ENCODE measurements at regions of chr14 and their contacts with region 1.

Region 1: GRCh38 chr14:99982537-99983250 is 82.5 kb upstream of the EVL start:
- DNase-seq: peak in 1 of 2 donors; percentile 42
- ATAC-seq: peak; percentile 84 to 93 (median 88)
- H3K4me3 ChIP-seq: no peak overlapping the region
- H3K27ac ChIP-seq: no peak overlapping the region
- H3K4me1 ChIP-seq: peaks cover 10% of the 10 kb centered on the region
- H3K27me3 ChIP-seq: no peaks in the 10 kb centered on the region
- CTCF ChIP-seq: peak; percentile 87

Region 2: GRCh38 chr14:100022762-100023451 is 40.2 kb after region 1 on chr14:
- intact Hi-C with region 1: loop called in 1 of 2 experiments (anchors 5 kb)
- DNase-seq: peak; percentile 49 to 80
- ATAC-seq: peak; percentile 93 to 98 (median 97)
- H3K4me3 ChIP-seq: no peak overlapping the region
- H3K27ac ChIP-seq: peak overlapping the region; percentile 6
- H3K4me1 ChIP-seq: peaks cover 9% of the 10 kb centered on the region
- H3K27me3 ChIP-seq: no peaks in the 10 kb centered on the region
- CTCF ChIP-seq: no peak

Region 3: GRCh38 chr14:100108042-100108825 is 125.5 kb after region 1 on chr14:
- intact Hi-C with region 1: loop called (anchors 1 to 2 kb)
- DNase-seq: peak; percentile 86 to 90
- ATAC-seq: peak; percentile 86 to 96 (median 88)
- H3K4me3 ChIP-seq: no peak overlapping the region
- H3K27ac ChIP-seq: no peak overlapping the region
- H3K4me1 ChIP-seq: peaks cover 22% of the 10 kb centered on the region
- H3K27me3 ChIP-seq: no peaks in the 10 kb centered on the region
- CTCF ChIP-seq: peak; percentile 90

Region 4: DNA sequence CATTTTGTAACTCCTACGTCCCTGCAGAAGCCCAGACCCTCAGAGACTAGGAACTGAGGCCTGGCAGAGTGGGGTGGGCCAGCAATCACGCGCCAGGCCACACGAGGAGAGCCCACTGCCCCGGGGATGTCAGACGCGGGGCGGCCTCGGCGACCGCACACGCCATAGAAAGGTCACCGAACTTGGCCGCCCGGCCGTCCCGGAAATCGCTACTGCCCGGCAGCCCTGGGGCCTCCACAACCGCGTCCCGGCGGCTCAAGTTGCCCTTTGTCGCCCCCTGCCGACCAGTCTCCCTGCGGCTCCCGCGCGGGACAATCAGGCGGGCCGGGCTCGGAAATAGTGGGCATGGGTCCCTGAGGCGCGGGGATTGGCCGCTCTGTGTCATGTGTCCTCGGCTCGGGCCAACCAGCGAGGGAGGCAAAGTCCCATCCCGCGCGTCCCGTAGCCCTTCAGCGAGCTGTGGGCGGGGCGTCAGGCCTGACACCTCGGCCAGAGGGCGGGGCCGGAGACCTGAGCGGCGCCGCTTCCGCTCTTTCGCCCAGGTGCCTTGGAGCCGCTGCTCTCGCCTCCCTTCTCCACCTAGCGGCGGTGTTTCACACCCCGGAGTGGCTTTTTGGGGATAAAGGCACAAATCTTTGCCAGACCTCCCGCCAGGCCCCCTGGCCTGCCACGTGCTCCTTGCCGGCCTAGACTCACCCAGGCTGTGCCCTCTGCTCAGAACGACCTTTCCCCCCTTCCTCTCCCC is 210.2 kb after region 1 on chr14:
- intact Hi-C with region 1: loop called (anchors 1 to 5 kb)
- DNase-seq: peak; percentile 99 to 100
- ATAC-seq: peak; percentile 99 to 100 (median 99)
- H3K4me3 ChIP-seq: peak overlapping the region; percentile 68
- H3K27ac ChIP-seq: peak overlapping the region; percentile 75
- H3K4me1 ChIP-seq: peaks cover 4% of the 10 kb centered on the region
- H3K27me3 ChIP-seq: no peaks in the 10 kb centered on the region
- CTCF ChIP-seq: peak; percentile 87

Measured in psoas muscle (tissue), 8 donors.